Right cardiac atrium (tissue), 5 donors: ENCODE measurements at regions of chr20 and their contacts with region 1.

Region 1: GRCh38 chr20:44217342-44218092 is 6.9 kb upstream of the OSER1 start:
- DNase-seq: peak; percentile 59 to 82 (median 77)
- ATAC-seq: peak; percentile 66 to 77
- H3K4me3 ChIP-seq: peak overlapping the region; percentile 40
- H3K27ac ChIP-seq: no peak overlapping the region
- H3K4me1 ChIP-seq: peaks cover 6% of the 10 kb centered on the region
- H3K27me3 ChIP-seq: no peaks in the 10 kb centered on the region

Region 2: DNA sequence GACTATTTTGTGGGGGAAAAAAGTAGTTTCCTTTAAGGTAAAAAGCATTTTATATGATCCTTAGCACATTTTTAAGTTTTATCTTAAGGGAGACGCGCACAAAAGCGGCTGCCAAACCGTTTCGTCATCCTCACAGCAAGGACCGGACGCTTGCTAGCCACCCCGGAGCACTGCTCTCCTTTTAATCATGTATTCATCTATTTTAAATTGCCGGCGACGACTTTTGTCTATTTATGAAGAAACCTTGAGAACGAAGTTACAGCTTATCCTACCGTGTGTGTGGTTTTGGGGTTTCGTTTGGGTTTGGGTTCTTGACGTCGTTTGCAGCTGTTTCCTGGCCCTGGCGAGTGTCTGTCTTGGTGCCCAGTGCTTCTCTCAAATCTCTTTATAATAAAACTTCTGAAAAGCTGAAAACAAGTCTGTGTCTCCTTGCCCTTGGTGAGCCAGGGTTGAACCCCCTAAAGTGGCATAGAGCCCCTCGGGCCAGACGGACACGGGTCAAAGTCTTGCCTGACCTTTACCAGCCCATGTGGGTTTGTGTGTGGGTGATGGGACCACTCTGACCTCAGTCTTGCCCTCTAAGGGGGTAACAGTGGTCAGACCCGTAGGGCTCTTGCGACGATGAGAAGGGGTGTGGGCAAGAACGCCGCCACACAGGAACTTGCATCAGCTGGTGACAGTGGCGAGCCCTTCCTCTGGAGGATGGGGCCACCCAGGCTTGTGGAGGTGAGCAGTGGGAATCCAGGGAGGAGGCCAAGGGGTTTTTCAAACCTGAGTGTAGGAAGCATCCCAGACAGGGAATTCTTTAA is 148.1 kb before region 1 on chr20:
- intact Hi-C with region 1: no loop called
- DNase-seq: peak in 1 of 3 donors; percentile 52
- ATAC-seq: no peak
- H3K4me3 ChIP-seq: no peak overlapping the region
- H3K27ac ChIP-seq: no peak overlapping the region
- H3K4me1 ChIP-seq: no peaks in the 10 kb centered on the region
- H3K27me3 ChIP-seq: no peaks in the 10 kb centered on the region

Region 3: GRCh38 chr20:44310664-44311639 is 93.4 kb after region 1 on chr20 and contains the start of gene FITM2:
- intact Hi-C with region 1: loop called (anchors 1 to 2 kb)
- DNase-seq: peak; percentile 99 to 100 (median 100)
- ATAC-seq: peak; percentile 94 to 95
- H3K4me3 ChIP-seq: peak within 1 kb of the TSS; percentile 53
- H3K27ac ChIP-seq: peak within 1 kb of the TSS; percentile 80
- H3K4me1 ChIP-seq: peaks cover 4% of the 10 kb centered on the region
- H3K27me3 ChIP-seq: no peaks in the 10 kb centered on the region
- total RNA-seq, gene FITM2: 121 to 150 (median 145) TPM

Region 4: GRCh38 chr20:44467289-44467883 is 249.9 kb after region 1 on chr20:
- intact Hi-C with region 1: loop called (anchors 5 to 10 kb)
- DNase-seq: peak in 2 of 3 donors; percentile 31 to 57
- ATAC-seq: peak; percentile 61 to 65
- H3K4me3 ChIP-seq: no peak overlapping the region
- H3K27ac ChIP-seq: no peak overlapping the region
- H3K4me1 ChIP-seq: no peaks in the 10 kb centered on the region
- H3K27me3 ChIP-seq: no peaks in the 10 kb centered on the region